Common myeloid progenitor, CD34-positive (primary cell): ENCODE measurements at regions of chr15 and their contacts with region 1.

Region 1: GRCh38 chr15:91517491-91518200 is 335.9 kb upstream of the SLCO3A1 start:
- DNase-seq: peak in 2 of 3 donors; percentile 37 to 45
- H3K4me3 ChIP-seq: no peak overlapping the region
- H3K27ac ChIP-seq: no peak overlapping the region
- H3K4me1 ChIP-seq: peaks cover 0 to 6% (median 2%) of the 10 kb centered on the region in 4 experiments
- H3K27me3 ChIP-seq: no peaks in the 10 kb centered on the region

Region 2: DNA sequence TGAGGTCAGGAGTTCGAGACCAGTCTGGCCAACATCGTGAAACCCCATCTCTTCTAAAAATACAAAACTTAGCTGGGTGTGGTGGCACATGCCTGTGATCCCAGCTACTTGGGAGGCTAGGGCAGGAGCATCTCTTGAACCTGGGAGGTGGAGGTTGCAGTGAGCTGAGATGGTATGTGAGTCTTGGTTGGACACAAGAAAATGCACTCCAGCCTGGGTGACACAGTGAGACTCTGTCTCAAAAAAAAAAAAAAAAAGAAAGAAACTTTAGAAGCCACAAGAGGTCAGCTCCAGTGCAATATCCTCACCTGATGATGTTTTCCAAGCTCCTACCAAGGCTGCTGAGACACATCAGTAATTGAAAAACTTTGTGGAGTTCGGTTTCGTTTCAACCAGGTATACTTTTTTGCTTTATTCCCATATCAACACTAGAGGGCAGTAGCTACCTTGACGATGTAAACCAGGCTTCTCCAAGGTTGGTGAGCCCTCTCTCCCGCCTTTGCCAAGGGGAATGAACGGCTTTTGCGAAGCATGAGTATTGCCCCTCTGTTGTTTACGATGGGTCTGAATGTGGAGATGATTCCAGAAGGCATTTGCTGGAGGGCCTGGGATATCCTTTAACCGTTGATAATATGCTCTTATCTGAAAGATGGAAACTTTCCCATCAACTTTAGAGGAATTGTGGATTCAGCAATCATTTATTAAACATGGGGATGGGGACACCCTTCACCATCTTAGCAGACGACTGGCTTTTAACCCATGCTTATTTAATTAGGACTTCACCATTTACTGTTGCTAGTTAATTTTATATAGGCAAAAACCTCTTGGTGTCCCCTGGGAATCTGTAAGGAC is 214.8 kb before region 1 on chr15:
- CTCF ChIA-PET with region 1: interaction called, 16 read pairs
- POLR2A ChIA-PET with region 1: no interaction called
- DNase-seq: peak; percentile 65 to 76 (median 71)
- H3K4me3 ChIP-seq: no peak overlapping the region
- H3K27ac ChIP-seq: no peak overlapping the region
- H3K4me1 ChIP-seq: peaks cover 0 to 7% (median under 1%) of the 10 kb centered on the region in 4 experiments
- H3K27me3 ChIP-seq: no peaks in the 10 kb centered on the region